ENCODE measurements at regions of chr3 and their contacts with region 1.

Region 1: GRCh38 chr3:183178629-183179549 is 16.4 kb upstream of the LAMP3 start:
- DNase-seq: peak; percentile 30 to 58
- ATAC-seq: peak; percentile 42 to 78 (median 56)
- H3K4me3 ChIP-seq: peak overlapping the region; percentile 72
- H3K27ac ChIP-seq: no peak overlapping the region
- H3K4me1 ChIP-seq: peaks cover 11% of the 10 kb centered on the region
- H3K27me3 ChIP-seq: peaks cover 0 to 39% (median 0%) of the 10 kb centered on the region in 3 donors
- CTCF ChIP-seq: no peak

Region 2: DNA sequence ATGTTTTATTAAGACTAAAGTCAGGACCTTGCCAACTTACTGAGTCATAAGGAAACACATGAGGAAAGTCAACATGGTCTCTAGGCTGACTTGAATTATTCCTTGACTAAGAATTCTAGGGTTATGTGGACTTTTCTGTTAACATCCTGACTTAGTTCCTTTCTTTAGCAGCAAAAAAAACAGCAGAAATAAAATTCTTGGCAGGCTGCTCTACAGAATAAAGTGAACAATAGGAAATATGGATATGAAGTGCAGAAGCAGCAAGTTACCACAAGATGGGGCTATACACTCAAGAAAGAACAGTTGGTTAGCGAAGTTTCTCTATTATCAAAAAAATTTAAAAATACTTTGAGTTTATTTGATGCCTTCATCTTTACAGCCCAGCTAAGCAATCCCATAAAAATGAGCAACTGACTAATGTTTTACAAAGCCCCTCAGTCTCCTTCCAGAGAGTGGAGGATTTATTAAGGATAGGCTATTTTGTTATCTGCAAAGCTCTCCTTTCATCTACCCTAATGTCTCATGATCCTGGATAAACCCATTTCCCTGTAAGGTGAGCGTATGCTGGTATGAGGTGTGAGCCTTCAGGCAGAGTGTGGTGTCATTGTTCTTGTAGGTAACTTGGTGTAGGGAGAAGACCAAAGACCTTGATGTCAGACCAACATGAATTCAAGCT is 56.5 kb before region 1 on chr3:
- intact Hi-C with region 1: loop called (anchors 5 kb)
- DNase-seq: no peak
- ATAC-seq: peak in 3 of 4 donors; percentile 52 to 78 (median 63)
- H3K4me3 ChIP-seq: no peak overlapping the region
- H3K27ac ChIP-seq: no peak overlapping the region
- H3K4me1 ChIP-seq: no peaks in the 10 kb centered on the region
- H3K27me3 ChIP-seq: peaks cover 0 to 11% (median under 1%) of the 10 kb centered on the region in 3 donors
- CTCF ChIP-seq: peak; percentile 84

Region 3: DNA sequence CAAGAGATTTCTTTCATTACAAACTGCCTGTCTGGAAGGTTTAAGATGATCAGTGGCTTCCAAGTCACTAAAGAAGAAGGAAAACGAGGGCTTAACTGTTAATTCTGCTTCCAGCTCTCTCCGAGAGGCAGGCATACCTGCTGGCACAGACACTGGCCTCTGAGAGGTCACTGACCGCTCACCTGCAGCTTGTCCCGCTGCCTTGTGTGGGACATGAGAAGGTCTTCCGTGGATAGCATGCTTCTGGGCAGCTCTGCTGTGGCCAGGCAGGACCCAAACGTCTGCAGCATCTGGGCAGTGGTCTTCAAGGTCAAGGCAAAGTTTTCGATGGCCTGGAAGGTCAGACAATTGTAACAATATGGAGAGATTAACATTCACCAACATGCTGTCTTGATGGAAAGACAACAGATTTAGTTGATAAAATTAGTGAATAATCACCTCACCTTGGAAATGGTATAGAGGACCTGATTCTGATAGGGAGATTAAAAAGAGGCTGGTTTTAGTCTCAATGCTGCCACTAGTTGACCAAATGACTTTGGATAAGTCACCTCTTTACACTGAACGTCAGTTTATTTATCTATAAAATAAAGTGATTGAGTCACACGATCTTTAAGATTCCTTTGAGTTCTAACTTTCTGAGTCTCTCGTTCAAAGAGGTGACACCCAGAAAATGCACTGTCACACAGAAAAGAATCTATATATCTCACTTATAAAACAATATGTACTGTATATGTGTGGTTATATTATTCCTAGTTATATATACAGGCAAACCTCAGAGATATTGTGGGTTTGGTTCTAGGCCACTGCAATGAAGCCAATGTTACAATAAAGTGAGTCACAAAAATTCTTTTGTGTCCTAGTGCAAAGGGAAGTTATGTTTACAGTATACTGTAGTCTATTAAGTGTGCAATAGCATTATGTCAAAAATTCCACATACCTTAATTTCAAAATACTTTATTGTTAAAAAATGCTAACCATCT is 139.3 kb after region 1 on chr3:
- intact Hi-C with region 1: loop called in 1 of 2 experiments (anchors 5 kb)
- DNase-seq: no peak
- ATAC-seq: no peak
- H3K4me3 ChIP-seq: no peak overlapping the region
- H3K27ac ChIP-seq: no peak overlapping the region
- H3K4me1 ChIP-seq: no peaks in the 10 kb centered on the region
- H3K27me3 ChIP-seq: no peaks in the 10 kb centered on the region
- CTCF ChIP-seq: no peak

Region 4: DNA sequence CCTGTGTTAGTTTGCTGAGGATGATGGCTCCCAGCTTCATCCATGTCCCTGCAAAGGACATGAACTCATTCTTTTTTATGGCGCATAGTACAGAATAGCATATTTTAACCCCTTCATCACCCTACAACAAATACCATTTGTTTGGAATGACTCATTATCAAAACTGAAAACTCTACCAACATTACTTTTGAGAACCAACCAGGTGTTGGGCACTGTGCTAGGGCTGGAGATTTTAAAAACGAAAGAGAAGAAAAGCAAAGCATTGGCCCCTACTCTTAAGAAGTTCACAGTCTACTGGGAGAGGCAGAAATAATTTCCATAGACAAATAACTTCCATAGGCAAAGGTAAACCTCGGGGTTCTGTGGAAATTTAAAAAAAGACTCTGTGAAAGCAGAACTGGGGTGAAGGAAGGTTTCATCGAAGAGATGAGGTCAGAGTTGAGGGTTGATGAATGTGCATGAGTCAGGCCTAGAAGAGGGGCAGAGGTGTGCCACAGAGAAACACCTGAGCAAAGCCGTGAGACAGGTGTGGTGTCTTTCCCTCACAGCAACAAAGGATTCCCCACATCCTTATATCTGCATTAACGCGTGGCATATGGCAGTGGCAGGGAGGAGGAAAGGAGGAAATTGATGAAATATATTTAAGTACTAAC is 198.5 kb after region 1 on chr3:
- intact Hi-C with region 1: loop called (anchors 1 to 2 kb)
- DNase-seq: no peak
- ATAC-seq: no peak
- H3K4me3 ChIP-seq: no peak overlapping the region
- H3K27ac ChIP-seq: no peak overlapping the region
- H3K4me1 ChIP-seq: no peaks in the 10 kb centered on the region
- H3K27me3 ChIP-seq: no peaks in the 10 kb centered on the region
- CTCF ChIP-seq: no peak

Region 5: DNA sequence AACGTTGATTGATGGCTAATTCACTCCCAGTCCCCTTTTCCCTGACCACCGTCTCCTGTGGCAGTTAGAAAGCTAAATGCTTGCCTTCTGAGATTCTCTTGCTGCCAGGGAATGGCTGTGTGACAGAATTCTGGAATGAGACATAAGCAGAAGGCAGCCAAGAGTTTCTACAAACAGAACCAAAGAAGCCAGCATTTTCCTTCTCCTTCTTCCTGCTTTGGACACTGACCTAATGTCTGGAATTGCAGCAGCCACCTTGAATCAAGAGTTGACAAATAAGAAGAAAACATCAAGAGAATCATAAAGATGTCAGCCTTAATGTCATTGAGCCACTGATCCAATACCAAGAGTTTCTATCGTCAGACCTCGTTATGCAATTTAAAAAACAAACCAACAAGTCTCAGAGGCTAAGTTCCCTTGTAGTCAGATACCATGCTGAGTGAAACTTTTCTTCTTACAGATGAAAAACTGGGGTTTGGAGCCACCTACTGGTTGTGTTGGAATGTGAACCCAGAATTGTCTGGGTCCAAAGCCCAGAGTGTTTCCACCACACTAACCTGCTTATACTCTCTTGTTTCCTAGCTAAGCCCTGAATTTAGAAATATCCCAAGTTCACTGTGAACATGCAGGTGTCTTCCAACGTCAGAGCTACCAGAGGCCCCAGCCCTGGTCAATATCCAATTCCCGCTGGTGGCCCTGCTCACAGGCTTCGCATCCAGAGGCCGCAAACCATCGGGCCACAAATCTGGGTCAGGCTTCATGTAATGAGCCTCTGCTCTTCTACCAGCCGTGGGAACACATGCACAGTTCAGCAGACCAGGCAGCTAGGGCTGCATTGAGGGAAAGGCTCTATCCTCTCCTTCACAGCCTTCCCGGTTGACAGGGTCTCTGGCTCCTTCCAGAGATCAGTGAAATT is 207.1 kb after region 1 on chr3:
- intact Hi-C with region 1: loop called (anchors 1 to 2 kb)
- DNase-seq: no peak
- ATAC-seq: peak; percentile 80 to 90 (median 84)
- H3K4me3 ChIP-seq: no peak overlapping the region
- H3K27ac ChIP-seq: no peak overlapping the region
- H3K4me1 ChIP-seq: no peaks in the 10 kb centered on the region
- H3K27me3 ChIP-seq: no peaks in the 10 kb centered on the region
- CTCF ChIP-seq: peak; percentile 81

Measured in psoas muscle (tissue), 8 donors.